ENCODE measurements at regions of chr11 and their contacts with region 1.

Region 1: GRCh38 chr11:19076744-19077589 is 16.4 kb upstream of the MRGPRX2 start:
- DNase-seq: peak; percentile 34
- H3K4me3 ChIP-seq: no peak overlapping the region
- H3K27ac ChIP-seq: no peak overlapping the region
- H3K4me1 ChIP-seq: peaks cover 20% of the 10 kb centered on the region
- H3K27me3 ChIP-seq: no peaks in the 10 kb centered on the region
- CTCF ChIP-seq: peak; percentile 95 to 98

Region 2: GRCh38 chr11:19116971-19117750 is 40.2 kb after region 1 on chr11 and contains the start of gene ZDHHC13:
- CTCF ChIA-PET with region 1: interaction called, 3 read pairs
- dilution Hi-C with region 1: no loop called
- in situ Hi-C with region 1: no loop called
- intact Hi-C with region 1: loop called (anchors 2 kb)
- DNase-seq: peak; percentile 90
- H3K4me3 ChIP-seq: peak within 1 kb of the TSS; percentile 77 to 98 (median 81)
- H3K27ac ChIP-seq: peak within 1 kb of the TSS; percentile 55
- H3K4me1 ChIP-seq: peaks cover 4% of the 10 kb centered on the region
- H3K27me3 ChIP-seq: no peaks in the 10 kb centered on the region
- CTCF ChIP-seq: peak; percentile 10 to 62
- total RNA-seq, gene ZDHHC13: 17.9 to 23.2 TPM

Region 3: DNA sequence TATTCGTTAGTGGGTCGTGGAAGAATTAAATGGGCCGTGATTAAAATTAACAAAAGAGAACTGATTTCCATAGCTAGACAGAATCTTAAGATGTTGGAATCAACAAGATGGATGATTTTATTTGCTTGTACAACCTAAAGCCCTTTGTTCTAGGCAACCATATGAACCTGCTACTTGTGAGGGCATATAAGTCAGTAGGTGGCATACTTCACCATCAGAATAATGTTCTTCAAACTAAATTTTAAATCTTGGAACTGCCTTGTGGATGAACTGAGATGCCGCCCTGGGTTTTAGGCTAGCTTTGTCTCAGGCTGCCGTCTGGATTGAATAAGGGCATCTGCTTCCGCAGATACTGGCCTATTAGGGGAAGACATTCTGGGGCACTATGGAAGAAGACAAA is 83.9 kb after region 1 on chr11:
- CTCF ChIA-PET with region 1: no interaction called
- dilution Hi-C with region 1: no loop called
- in situ Hi-C with region 1: no loop called
- intact Hi-C with region 1: loop called (anchors 5 kb)
- DNase-seq: no peak
- H3K4me3 ChIP-seq: no peak overlapping the region
- H3K27ac ChIP-seq: no peak overlapping the region
- H3K4me1 ChIP-seq: no peaks in the 10 kb centered on the region
- H3K27me3 ChIP-seq: no peaks in the 10 kb centered on the region
- CTCF ChIP-seq: peak in 1 of 2 donors; percentile 19

Region 4: DNA sequence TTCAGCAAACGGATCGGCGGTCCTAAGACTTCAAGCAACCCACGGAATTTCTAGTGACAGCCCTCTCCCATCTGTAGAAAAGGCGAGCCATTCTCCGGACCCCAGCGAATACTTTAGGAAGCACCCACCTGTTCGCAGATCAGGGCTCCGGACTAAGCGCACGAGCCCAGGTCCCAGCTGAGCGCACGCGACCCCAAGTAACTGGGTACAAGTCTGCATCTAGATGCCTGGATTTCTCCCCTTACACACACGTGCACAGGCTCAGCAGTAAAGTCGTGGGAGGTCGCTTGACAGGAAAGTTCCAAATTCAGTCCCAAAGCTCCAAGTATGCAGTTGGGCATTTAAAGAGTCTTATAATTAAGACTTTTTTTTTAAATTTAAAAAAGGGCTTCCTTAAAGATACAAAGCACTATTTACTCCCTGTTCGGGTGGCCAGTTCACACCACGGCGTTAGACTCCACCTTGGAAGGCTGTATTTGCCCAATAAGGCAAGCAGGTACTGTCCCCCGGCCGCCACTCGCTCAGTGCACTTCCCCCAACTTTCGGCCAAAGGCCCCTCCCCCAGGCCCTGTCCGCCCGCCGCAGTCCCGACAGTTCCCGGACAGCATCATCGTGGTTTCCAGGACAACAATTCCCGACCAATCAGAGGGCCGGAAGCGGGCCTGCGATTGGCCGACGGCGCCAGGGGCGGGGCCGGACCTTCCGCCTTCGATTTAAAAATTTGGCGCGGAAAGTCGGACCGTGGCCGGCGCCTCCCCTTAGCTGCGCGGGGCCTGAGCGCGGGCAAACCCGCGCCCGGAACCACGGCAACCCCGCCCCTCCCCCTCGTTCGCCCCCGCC is 163.7 kb after region 1 on chr11 and contains the start of gene E2F8:
- CTCF ChIA-PET with region 1: no interaction called
- dilution Hi-C with region 1: no loop called
- in situ Hi-C with region 1: no loop called
- intact Hi-C with region 1: loop called (anchors 5 kb)
- DNase-seq: peak; percentile 95
- H3K4me3 ChIP-seq: peak within 1 kb of the TSS; percentile 63 to 77 (median 77)
- H3K27ac ChIP-seq: peak within 1 kb of the TSS; percentile 90
- H3K4me1 ChIP-seq: peaks cover 41% of the 10 kb centered on the region
- H3K27me3 ChIP-seq: no peaks in the 10 kb centered on the region
- CTCF ChIP-seq: no peak
- total RNA-seq, gene E2F8: 0.17 to 3.4 TPM